ENCODE measurements at regions of chr18 and their contacts with region 1.

Region 1: GRCh38 chr18:55641486-55641885 is 53.5 kb upstream of the TCF4 start:
- DNase-seq: no peak
- H3K4me3 ChIP-seq: no peak overlapping the region
- H3K27ac ChIP-seq: no peak overlapping the region
- H3K4me1 ChIP-seq: no peaks in the 10 kb centered on the region
- H3K27me3 ChIP-seq: no peaks in the 10 kb centered on the region
- CTCF ChIP-seq: no peak

Region 2: GRCh38 chr18:55694291-55694690 is 52.8 kb after region 1 on chr18:
- intact Hi-C with region 1: loop called (anchors 10 kb)
- DNase-seq: no peak
- H3K4me3 ChIP-seq: no peak overlapping the region
- H3K27ac ChIP-seq: no peak overlapping the region
- H3K4me1 ChIP-seq: no peaks in the 10 kb centered on the region
- H3K27me3 ChIP-seq: no peaks in the 10 kb centered on the region
- CTCF ChIP-seq: no peak

Region 3: GRCh38 chr18:56060967-56061541 is 419.6 kb after region 1 on chr18:
- intact Hi-C with region 1: no loop called
- DNase-seq: no peak
- H3K4me3 ChIP-seq: no peak overlapping the region
- H3K27ac ChIP-seq: no peak overlapping the region
- H3K4me1 ChIP-seq: peaks cover under 1% of the 10 kb centered on the region
- H3K27me3 ChIP-seq: no peaks in the 10 kb centered on the region
- CTCF ChIP-seq: no peak